PC-3 (cell line): ENCODE measurements at regions of chr3 and their contacts with region 1.

Region 1: GRCh38 chr3:152827309-152827708 is 7.6 kb upstream of the P2RY1 start:
- DNase-seq: no peak
- ATAC-seq: no peak
- H3K4me3 ChIP-seq: no peak overlapping the region
- H3K27ac ChIP-seq: no peak overlapping the region
- H3K4me1 ChIP-seq: no peaks in the 10 kb centered on the region
- H3K27me3 ChIP-seq: peaks cover 53% of the 10 kb centered on the region
- CTCF ChIP-seq: no peak

Region 2: DNA sequence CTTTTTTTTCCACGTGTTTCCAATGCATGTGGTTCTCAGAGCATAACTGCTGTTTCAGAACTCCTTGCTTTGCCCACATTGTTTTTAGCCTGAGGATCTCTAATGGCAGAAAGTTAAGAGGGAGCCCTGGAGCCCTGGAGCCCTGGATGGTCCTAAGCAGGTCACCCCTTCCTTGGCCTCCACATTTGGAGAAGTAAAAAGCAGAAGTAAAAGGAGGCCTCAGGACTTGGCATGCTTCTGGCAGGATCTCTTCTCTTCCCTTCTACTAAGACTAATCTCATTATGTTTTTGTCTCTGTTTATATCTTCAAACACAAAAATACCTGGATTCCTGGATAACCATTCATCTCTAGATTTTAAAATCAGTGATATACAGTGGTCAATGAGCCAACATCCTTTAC is 57.8 kb after region 1 on chr3:
- CTCF ChIA-PET with region 1: no interaction called
- POLR2A ChIA-PET with region 1: interaction called, 13 read pairs
- intact Hi-C with region 1: no loop called
- DNase-seq: no peak
- ATAC-seq: no peak
- H3K4me3 ChIP-seq: no peak overlapping the region
- H3K27ac ChIP-seq: no peak overlapping the region
- H3K4me1 ChIP-seq: no peaks in the 10 kb centered on the region
- H3K27me3 ChIP-seq: peaks cover 4% of the 10 kb centered on the region; the same call in 1 of the 2 replicates
- CTCF ChIP-seq: no peak